BJ (cell line): ENCODE measurements at regions of chr15 and their contacts with region 1.

Region 1: DNA sequence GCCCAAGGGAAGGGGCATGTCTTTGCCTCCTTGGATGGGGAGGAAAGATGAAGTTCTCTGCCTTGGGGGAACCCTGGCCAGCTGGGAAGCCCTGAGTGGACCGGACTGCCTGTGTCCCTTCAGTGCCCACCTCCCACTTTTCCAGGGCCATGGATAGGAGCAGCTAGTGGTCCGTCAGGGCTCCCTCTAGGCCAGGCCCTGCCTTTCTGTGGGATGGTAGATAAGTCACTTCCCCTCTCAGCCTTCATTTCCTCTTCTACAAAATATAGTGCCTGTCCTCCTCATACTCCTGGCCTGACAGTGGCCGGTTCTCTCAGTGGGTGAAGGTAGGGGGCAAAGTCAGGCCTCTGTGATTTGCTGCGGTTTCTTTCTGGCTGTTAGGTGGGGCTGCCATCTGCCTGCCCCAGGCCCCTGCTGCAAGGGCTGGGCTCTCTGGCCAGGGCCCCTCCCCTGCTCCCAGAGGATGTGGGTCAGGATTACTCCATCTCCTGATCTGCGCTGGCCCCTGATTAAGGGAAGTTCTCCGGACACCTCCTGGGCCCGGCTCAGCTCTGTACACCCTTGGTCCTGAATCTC is 1.4 kb downstream of the PLEKHO2 start:
- DNase-seq: no peak
- H3K4me3 ChIP-seq: peak overlapping the region; percentile 93
- H3K27me3 ChIP-seq: no peaks in the 10 kb centered on the region
- CTCF ChIP-seq: no peak

Region 2: DNA sequence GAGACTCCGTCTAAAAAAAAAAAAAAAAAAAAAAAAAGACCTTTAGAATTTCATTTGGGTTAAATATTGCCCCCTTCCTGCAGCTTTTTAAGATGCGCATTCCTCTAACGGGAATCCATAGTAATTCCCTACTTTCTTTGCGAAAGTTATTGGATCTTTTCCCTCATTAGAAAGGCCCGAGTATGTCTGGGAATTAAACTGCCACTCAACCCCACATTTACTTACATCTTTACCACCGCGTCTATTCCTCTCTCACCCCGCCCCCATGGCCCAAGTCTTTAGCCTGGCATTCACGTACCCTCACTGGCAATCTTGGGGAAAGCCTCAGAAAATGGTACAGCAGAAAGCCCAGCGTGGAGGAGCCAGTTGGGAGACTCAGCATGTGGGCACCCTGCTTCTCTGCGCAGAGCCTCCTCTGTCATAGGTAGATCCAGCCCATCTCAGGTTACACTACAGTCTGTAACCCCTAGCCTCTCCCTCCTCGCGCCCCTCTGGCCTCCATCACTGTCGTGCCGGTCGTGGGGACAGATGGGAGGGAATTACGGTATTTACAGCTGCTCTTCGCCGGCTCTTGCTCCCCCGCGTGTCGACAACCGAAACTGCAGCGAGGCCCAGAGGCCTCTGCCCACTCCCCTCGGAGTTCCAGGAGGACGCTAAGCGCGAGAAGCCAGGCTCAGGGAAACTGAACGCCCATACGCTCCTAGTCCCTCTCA is 62.2 kb after region 1 on chr15:
- CTCF ChIA-PET with region 1: interaction called, 10 read pairs
- POLR2A ChIA-PET with region 1: no interaction called
- DNase-seq: no peak
- H3K4me3 ChIP-seq: peak overlapping the region; percentile 7
- H3K27me3 ChIP-seq: no peaks in the 10 kb centered on the region
- CTCF ChIP-seq: peak; percentile 87